GM18951 (cell line): ENCODE measurements at regions of chr12 and their contacts with region 1.

Region 1: DNA sequence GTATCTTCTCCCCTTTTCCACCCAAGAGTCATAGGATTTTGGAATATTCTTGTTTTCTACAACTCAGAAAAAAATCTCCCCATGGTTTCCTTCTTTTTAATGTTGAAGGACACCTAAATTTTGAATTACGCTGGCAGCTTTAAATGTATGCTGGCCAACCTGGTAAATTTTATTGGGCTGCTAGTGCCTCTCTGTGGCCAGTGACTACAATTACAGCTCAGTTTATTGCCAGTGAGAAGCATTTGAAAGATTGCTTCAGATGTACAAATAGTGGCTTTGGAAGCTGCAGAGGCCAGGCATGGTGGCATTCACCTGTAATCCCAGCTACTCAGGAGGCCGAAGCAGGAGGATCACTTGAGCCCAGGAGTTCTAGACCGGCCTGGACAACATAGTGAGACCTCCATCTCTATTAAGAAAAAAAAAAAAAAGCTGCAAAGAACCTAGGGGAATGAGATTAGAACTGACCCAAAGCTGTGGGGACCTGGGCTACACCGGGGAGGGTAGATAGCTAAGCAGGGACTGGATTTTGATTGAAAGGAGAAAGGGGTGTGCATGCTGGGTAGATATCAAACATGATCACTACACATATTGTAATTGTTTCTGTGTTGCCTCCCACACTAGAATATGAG is 7.6 kb upstream of the RAB21 start:
- POLR2A ChIP-seq: no peak

Region 2: GRCh38 chr12:71415336-71416231 is 331.5 kb before region 1 on chr12:
- in situ Hi-C with region 1: loop called (anchors 25 kb)
- POLR2A ChIP-seq: no peak

Region 3: GRCh38 chr12:72304751-72305150 is 557.7 kb after region 1 on chr12:
- in situ Hi-C with region 1: no loop called
- POLR2A ChIP-seq: no peak